Mammary epithelial cell (primary cell): ENCODE measurements at regions of chr12 and their contacts with region 1.

Region 1: GRCh38 chr12:118312578-118312977 is 60.1 kb downstream of the TAOK3 start:
- DNase-seq: peak; percentile 46
- H3K4me3 ChIP-seq: no peak overlapping the region
- H3K27ac ChIP-seq: no peak overlapping the region
- H3K4me1 ChIP-seq: peaks cover 12% of the 10 kb centered on the region
- H3K27me3 ChIP-seq: no peaks in the 10 kb centered on the region
- CTCF ChIP-seq: no peak

Region 2: DNA sequence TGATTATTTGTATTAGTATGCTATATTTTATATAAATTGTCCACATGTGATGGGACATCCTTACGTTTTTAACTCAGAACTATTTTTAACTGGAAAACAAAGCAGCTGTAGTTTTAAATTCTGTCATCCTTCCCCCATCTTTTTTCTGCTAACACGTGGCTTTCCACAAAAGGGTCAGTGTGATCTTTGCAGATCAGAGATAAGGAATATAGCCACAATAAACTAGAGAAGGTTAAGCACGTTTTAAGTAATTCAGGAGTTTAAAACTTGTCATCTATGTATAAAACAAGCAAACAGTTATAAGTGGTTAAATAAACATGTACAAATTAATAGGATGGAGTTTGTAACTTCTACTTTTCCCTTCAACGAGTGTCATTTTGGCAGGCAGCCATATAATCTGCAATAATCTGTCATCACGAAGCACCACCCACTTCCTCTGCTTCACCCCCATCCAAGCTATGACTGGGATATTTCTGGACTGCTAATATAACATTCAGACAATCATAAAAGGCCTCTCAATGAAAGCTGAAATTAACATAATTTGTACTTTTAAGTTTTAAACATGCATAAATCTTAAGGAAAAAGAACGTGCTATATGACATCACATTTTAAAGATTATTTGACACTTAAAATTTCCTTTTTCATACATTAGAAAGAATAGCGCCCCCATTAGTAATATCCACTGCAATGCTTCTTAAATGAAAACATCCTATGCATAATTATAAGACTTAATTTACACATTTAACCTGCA is 44.9 kb after region 1 on chr12:
- CTCF ChIA-PET with region 1: no interaction called
- dilution Hi-C with region 1: loop called (anchors 5 kb)
- in situ Hi-C with region 1: no loop called
- intact Hi-C with region 1: loop called (anchors 2 kb)
- DNase-seq: peak; percentile 54
- H3K4me3 ChIP-seq: no peak overlapping the region
- H3K27ac ChIP-seq: peak overlapping the region; percentile 94
- H3K4me1 ChIP-seq: peaks cover 28% of the 10 kb centered on the region
- H3K27me3 ChIP-seq: no peaks in the 10 kb centered on the region
- CTCF ChIP-seq: peak in 1 of 2 donors; percentile 15